ENCODE measurements at regions of chr10 and their contacts with region 1.

Region 1: DNA sequence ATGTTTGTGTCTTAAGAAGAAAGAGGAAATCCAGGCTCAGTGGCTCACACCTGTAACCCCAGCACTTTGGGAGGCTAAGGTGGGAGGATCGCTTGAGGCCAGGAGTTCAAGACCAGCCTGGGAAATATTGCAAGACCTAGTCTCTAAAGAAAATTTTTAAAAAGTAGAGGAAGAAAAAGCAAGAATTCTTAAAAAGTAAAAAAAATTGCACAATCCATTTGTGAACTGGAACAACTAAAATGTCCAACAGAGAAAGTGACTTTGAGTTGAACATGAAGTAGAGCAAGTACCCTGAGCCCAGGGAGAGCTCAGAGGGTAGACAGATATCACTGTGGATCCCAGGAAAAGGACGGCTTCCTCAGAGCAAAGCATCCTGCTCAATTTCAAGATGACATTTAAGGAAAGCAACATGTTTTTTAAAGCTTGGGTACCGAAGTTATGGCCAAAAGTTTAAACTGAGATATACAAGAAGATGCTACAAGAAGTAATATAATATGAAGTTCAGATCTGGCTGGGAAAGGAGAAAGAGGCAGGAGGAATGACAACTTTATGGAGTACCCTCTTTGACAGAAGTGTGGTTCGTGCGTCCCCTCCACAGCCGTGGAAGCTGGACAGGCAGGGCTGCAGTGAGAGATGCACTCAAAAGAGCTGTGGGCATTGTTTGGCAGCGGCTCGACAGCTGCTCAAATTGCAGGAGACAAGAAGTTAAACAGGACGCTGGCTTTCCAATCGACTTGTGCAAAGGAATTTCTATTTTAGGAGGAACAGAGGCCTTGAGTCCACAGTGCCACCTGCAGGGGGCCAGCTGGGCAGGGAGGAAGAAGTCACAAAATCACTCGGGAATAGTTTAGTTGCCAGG is 201.3 kb downstream of the JCAD start:
- DNase-seq: peak; percentile 77 to 89
- ATAC-seq: peak; percentile 70 to 84
- H3K4me3 ChIP-seq: peak overlapping the region in 2 of 4 donors; percentile 5 to 37
- H3K27ac ChIP-seq: peak overlapping the region; percentile 78 to 85 (median 84)
- H3K4me1 ChIP-seq: peaks cover 47 to 49% of the 10 kb centered on the region in 2 donors
- H3K27me3 ChIP-seq: no peaks in the 10 kb centered on the region
- CTCF ChIP-seq: peak; percentile 75 to 85 (median 77)
- POLR2A ChIP-seq: peak in 1 of 2 donors; percentile 41

Region 2: GRCh38 chr10:28679581-28680357 is 1178.3 kb before region 1 on chr10:
- in situ Hi-C with region 1: no loop called
- intact Hi-C with region 1: no loop called
- DNase-seq: no peak
- ATAC-seq: no peak
- H3K4me3 ChIP-seq: no peak overlapping the region
- H3K27ac ChIP-seq: no peak overlapping the region
- H3K4me1 ChIP-seq: peaks cover 18 to 21% of the 10 kb centered on the region in 2 donors
- H3K27me3 ChIP-seq: peaks cover 0 to 13% (median 4%) of the 10 kb centered on the region in 3 donors
- CTCF ChIP-seq: no peak
- POLR2A ChIP-seq: no peak

Region 3: GRCh38 chr10:29635711-29636144 is 222.3 kb before region 1 on chr10:
- in situ Hi-C with region 1: loop called in 2 of 4 experiments (anchors 25 kb)
- intact Hi-C with region 1: no loop called
- DNase-seq: no peak
- ATAC-seq: peak; percentile 16 to 18
- H3K4me3 ChIP-seq: peak overlapping the region; percentile 2 to 73 (median 54)
- H3K27ac ChIP-seq: peak overlapping the region; percentile 95 to 96 (median 96)
- H3K4me1 ChIP-seq: peaks cover 11 to 21% of the 10 kb centered on the region in 2 donors
- H3K27me3 ChIP-seq: no peaks in the 10 kb centered on the region
- CTCF ChIP-seq: no peak
- POLR2A ChIP-seq: peak in 1 of 2 donors; percentile 7

Region 4: DNA sequence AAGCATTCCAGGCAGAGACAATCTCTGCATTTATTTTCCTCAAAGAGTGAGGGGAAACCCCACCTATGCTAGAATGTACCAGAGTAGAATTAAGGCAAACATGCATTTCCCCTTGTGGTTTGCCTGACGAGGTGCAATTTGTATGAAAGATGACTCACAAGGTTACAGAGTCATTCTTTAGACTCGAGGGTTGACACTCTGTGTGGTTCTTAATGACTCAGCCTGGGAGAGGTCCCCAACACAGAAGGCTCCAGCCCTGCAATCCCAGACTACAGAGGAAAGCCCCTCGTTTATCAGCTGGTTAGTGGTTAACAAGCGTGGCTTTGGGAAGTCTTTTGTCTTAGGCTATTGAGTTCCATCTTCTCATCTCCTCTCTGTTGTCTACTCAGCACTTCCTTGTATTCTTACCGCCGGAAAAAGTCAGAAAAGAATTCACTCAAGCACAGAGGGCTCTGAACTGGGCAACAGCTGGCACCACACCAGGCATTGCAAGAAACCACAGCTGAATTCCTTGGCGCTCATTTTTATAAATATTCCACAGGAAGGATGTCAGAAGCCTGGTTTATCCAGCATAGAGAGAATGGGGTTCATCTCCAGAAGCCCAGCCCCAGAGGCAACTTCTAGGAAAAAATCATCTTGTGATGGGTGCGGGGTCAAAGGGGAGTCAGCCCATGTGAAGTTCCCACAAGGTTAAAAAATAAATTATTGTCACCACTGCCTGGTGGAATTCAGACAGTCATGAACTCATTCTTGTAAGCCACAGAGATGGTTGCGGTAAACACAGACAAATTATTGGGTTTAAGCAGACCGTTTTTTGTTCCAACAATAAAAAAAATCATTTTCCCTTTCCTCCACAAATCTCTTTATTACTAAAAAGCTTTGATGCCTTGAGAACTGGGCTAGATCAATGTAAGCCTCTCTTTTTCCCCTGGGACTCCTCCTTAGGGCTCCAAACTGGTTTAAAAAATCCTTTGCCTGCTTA is 198.8 kb before region 1 on chr10:
- in situ Hi-C with region 1: no loop called
- intact Hi-C with region 1: loop called (anchors 5 kb)
- DNase-seq: peak in 1 of 2 donors; percentile 59
- ATAC-seq: peak; percentile 90 to 95
- H3K4me3 ChIP-seq: no peak overlapping the region
- H3K27ac ChIP-seq: peak overlapping the region; percentile 67 to 82 (median 72)
- H3K4me1 ChIP-seq: peaks cover 20 to 38% of the 10 kb centered on the region in 2 donors
- H3K27me3 ChIP-seq: no peaks in the 10 kb centered on the region
- CTCF ChIP-seq: peak in 4 of 5 experiments; percentile 24 to 69 (median 40)
- POLR2A ChIP-seq: peak; percentile 24 to 50

Region 5: DNA sequence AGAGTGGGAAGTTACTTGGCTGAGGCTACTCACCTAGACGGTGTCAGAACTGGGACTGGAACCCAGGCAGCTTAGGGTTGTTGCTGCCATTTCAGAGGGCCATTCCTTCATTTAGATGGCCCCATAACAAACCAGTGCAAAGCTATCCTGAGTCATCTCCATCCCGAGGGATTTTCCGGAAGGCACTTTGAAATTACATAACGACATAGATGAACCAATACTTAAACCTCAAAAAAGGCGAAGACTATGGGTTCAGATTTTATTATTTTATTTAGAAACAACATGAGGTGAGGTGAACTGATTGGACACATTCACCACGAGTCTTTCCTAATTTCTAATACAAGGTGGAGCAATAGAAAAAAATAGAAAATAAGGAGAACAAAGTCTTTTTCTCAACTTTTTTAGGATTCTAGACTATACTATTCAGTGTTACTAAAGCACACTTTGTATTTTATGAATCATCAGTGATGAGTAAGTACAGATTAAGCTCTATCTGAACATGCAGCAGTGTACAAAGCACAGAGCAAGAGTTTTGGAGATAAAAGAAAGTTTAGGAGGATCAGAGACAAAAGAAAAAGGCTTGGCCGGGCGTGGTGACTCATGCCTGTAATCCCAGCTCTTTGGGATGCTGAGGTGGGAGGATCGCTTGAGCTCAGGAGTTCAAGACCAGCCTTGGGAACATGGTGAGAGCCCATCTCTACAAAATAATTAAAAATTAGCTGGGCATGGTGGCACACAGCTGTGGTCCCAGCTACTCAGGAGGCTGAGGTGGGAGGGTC is 143.8 kb before region 1 on chr10:
- in situ Hi-C with region 1: no loop called
- intact Hi-C with region 1: no loop called
- DNase-seq: no peak
- ATAC-seq: no peak
- H3K4me3 ChIP-seq: no peak overlapping the region
- H3K27ac ChIP-seq: peak overlapping the region in 1 of 4 donors; percentile 31
- H3K4me1 ChIP-seq: peaks cover 53 to 67% of the 10 kb centered on the region in 2 donors
- H3K27me3 ChIP-seq: no peaks in the 10 kb centered on the region
- CTCF ChIP-seq: no peak
- POLR2A ChIP-seq: no peak

Region 6: GRCh38 chr10:29746080-29746797 is 111.8 kb before region 1 on chr10:
- in situ Hi-C with region 1: loop called in 1 of 4 experiments (anchors 10 kb)
- intact Hi-C with region 1: no loop called
- DNase-seq: no peak
- ATAC-seq: peak; percentile 64 to 77
- H3K4me3 ChIP-seq: no peak overlapping the region
- H3K27ac ChIP-seq: peak overlapping the region; percentile 63 to 76 (median 72)
- H3K4me1 ChIP-seq: peaks cover 10% of the 10 kb centered on the region in 2 donors
- H3K27me3 ChIP-seq: no peaks in the 10 kb centered on the region
- CTCF ChIP-seq: no peak
- POLR2A ChIP-seq: no peak

Region 7: GRCh38 chr10:30300728-30301127 is 442.7 kb after region 1 on chr10:
- in situ Hi-C with region 1: no loop called
- intact Hi-C with region 1: no loop called
- DNase-seq: no peak
- ATAC-seq: no peak
- H3K4me3 ChIP-seq: no peak overlapping the region
- H3K27ac ChIP-seq: no peak overlapping the region
- H3K4me1 ChIP-seq: no peaks in the 10 kb centered on the region
- H3K27me3 ChIP-seq: no peaks in the 10 kb centered on the region
- CTCF ChIP-seq: no peak
- POLR2A ChIP-seq: no peak